Right cardiac atrium (tissue), 5 donors: ENCODE measurements at regions of chr11 and their contacts with region 1.

Region 1: DNA sequence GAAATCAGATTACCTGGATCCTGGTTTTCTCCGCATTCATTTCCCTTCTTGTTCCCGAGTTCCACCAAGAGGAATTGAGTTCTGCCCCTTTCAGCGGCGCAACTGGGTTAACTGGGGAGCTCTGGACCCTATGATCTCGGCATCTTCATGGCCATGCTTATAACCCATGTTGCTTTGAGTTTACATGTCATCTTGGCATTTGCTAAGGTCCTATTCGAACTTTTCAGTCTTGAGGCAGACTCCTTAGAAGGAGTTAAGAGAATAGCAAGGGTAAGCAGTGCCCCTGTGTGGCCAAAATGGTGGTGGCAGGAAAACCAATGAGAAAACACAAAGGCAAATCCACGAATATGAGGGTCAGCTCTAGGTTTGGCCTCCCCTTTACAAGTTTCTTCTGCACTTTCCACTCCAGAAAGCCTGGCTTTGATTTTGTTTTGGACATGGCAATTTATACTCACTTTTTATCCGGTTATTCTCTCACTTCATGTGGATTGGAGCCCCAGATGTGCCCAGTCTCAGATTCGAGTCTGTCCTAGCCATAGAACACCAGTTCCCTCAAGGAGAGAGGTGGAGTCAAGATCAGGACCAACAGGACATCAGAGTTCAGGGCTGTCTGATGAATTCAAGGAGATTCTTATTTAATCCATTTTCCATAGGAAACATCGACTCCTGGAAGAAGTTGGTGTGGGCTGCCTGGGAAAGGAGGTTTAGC is 55.3 kb upstream of the FBXO3 start:
- DNase-seq: peak in 2 of 3 donors; percentile 34 to 80
- ATAC-seq: peak; percentile 86 to 92
- H3K4me3 ChIP-seq: peak overlapping the region; percentile 36
- H3K27ac ChIP-seq: no peak overlapping the region
- H3K4me1 ChIP-seq: no peaks in the 10 kb centered on the region
- H3K27me3 ChIP-seq: peaks cover 4% of the 10 kb centered on the region

Region 2: DNA sequence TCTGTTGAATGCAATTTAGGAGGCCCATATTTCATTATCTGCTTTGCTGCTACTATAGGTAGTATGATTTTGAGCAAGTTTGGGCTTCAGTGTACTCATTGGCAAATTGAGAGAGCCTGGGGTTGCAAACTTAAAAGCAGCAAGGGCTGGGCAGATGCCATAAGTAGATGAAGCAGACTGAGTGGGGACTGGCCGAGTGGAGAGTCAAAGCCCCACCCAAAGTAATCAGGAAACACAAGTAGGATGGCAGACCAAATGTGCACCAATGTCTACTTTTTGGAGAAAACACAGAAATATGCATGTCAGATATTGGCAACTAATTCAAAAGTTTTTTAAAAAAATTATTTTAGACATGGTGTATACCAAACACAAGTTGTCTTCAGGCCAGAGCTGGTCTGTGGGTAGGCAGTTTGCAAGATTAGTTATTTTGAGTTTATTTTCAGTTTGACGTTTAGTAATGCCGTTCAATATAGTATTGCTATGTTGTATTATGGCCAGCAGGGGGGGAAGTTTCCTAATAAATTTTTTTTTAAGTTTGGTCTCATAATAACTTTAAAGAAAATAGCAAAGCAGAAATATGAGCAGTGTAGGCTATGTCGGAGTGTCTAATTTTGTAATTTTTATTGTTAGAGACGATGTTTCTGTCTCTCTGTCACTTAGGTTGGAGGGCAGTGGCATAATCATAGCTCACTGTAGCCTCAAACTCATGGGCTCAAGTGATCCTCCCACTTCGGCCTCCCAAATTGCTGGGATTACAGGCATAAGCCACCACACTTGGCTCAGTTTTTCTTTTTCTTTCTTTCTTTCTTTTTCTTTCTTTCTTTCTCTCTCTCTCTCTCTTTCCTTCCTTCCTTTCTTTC is 467.3 kb before region 1 on chr11:
- intact Hi-C with region 1: loop called in 1 of 4 experiments (anchors 10 kb)
- DNase-seq: no peak
- ATAC-seq: peak; percentile 30 to 53
- H3K4me3 ChIP-seq: no peak overlapping the region
- H3K27ac ChIP-seq: no peak overlapping the region
- H3K4me1 ChIP-seq: peaks cover 3% of the 10 kb centered on the region
- H3K27me3 ChIP-seq: no peaks in the 10 kb centered on the region

Region 3: GRCh38 chr11:33893711-33894397 is 64.3 kb after region 1 on chr11:
- intact Hi-C with region 1: no loop called
- DNase-seq: peak in 1 of 3 donors; percentile 54
- ATAC-seq: peak; percentile 53 to 60
- H3K4me3 ChIP-seq: no peak overlapping the region
- H3K27ac ChIP-seq: no peak overlapping the region
- H3K4me1 ChIP-seq: peaks cover 3% of the 10 kb centered on the region
- H3K27me3 ChIP-seq: no peaks in the 10 kb centered on the region

Region 4: GRCh38 chr11:34685864-34686263 is 856.3 kb after region 1 on chr11:
- intact Hi-C with region 1: no loop called
- DNase-seq: no peak
- ATAC-seq: no peak
- H3K4me3 ChIP-seq: no peak overlapping the region
- H3K27ac ChIP-seq: no peak overlapping the region
- H3K4me1 ChIP-seq: no peaks in the 10 kb centered on the region
- H3K27me3 ChIP-seq: no peaks in the 10 kb centered on the region